ENCODE measurements at regions of chr16 and their contacts with region 1.

Region 1: DNA sequence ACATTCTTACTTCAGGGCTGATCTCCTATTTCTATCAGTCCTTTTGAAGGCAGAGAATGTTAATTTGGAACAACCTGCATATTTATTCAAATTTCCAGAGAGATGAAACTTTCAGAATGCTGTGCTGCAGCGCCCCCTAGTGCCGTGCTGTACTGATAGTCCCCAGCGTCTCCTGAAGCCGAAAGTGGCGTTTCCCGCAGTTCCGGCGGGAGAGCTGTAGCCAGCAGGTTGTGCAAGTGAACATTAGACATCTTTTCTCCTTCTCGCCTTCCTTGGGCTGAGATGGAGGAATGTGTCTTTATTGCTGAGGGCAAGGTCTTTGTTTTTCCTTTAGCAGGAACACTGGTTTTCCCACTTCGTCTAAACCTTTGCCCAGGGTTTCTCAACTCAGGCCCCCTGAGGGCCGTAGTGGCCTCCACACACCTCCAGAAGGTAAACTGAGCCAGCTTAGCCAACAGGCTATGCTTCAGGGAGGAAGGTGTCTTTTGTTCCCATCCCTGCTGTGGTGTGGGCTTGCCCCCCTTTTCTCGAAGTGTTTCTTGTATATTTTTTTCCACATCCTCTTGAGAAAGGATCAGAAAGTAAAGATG is 26.4 kb downstream of the USP10 start:
- DNase-seq: peak; percentile 85
- ATAC-seq: peak; percentile 55
- H3K4me3 ChIP-seq: peak overlapping the region; percentile 28 to 59 (median 52)
- H3K4me3 Mint-ChIP-seq: peak overlapping the region; percentile 87
- H3K27ac ChIP-seq: peak overlapping the region; percentile 55 to 78
- H3K27ac Mint-ChIP-seq: peak overlapping the region; percentile 90
- H3K4me1 ChIP-seq: peaks cover 44 to 58% of the 10 kb centered on the region in 2 donors
- H3K4me1 Mint-ChIP-seq: peaks cover 74% of the 10 kb centered on the region
- H3K27me3 ChIP-seq: no peaks in the 10 kb centered on the region
- H3K27me3 Mint-ChIP-seq: no peaks in the 10 kb centered on the region
- CTCF ChIP-seq: peak; percentile 99

Region 2: GRCh38 chr16:84504420-84505248 is 221.5 kb before region 1 on chr16 and contains the start of gene MEAK7:
- CTCF ChIA-PET with region 1: interaction called, 16 read pairs
- POLR2A ChIA-PET with region 1: no interaction called
- intact Hi-C with region 1: no loop called
- DNase-seq: peak; percentile 98
- ATAC-seq: peak; percentile 97
- H3K4me3 ChIP-seq: peak within 1 kb of the TSS; percentile 63 to 88 (median 77)
- H3K4me3 Mint-ChIP-seq: peak within 1 kb of the TSS; percentile 95
- H3K27ac ChIP-seq: peak within 1 kb of the TSS; percentile 47 to 65
- H3K27ac Mint-ChIP-seq: peak within 1 kb of the TSS; percentile 90
- H3K4me1 ChIP-seq: peaks cover 33 to 44% of the 10 kb centered on the region in 2 donors
- H3K4me1 Mint-ChIP-seq: peaks cover 49% of the 10 kb centered on the region
- H3K27me3 ChIP-seq: no peaks in the 10 kb centered on the region
- H3K27me3 Mint-ChIP-seq: no peaks in the 10 kb centered on the region
- CTCF ChIP-seq: no peak
- total RNA-seq, gene MEAK7: 19.3 and 23.0 TPM in 2 replicates

Region 3: DNA sequence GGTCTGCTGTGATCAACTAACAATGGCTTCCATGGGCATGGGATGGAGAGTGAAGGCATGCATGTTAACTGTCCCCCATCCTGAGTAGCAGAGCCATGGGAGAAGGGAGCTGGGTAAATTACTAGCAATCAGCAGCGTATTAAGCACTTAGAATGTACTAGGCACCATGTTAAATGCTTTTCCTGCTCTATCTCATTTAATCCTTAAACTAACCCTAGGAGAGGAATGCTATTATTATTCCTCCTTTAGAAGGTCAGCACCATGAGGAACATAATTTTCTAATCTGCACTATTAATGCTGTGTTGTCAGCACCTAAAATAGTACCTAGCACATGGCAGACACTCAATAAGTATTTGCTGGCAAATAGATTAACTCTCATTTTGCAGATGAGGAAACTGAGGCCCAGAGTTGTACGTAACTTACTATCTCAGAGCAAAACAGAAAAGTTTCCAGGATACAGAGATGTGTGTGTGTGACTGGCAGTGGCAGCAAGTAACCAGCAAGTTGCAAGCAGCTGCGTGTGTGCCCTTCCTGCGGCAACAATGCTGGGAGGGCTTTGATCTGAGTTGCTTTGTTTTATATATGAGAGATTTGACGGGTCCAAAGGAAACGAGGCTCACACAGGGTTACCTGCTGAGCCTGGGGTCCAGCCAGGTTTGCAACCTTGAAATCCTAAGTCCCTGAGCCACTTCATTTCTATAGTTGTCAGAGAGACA is 84.4 kb before region 1 on chr16:
- CTCF ChIA-PET with region 1: interaction called, 36 read pairs
- POLR2A ChIA-PET with region 1: no interaction called
- intact Hi-C with region 1: no loop called
- DNase-seq: no peak
- ATAC-seq: no peak
- H3K4me3 ChIP-seq: peak overlapping the region in 1 of 5 experiments; percentile 38
- H3K4me3 Mint-ChIP-seq: peak overlapping the region; percentile 81
- H3K27ac ChIP-seq: peak overlapping the region; percentile 74 to 75
- H3K27ac Mint-ChIP-seq: peak overlapping the region; percentile 96
- H3K4me1 ChIP-seq: peaks cover 54 to 76% of the 10 kb centered on the region in 2 donors
- H3K4me1 Mint-ChIP-seq: peaks cover 78% of the 10 kb centered on the region
- H3K27me3 ChIP-seq: no peaks in the 10 kb centered on the region
- H3K27me3 Mint-ChIP-seq: no peaks in the 10 kb centered on the region
- CTCF ChIP-seq: no peak

Region 4: DNA sequence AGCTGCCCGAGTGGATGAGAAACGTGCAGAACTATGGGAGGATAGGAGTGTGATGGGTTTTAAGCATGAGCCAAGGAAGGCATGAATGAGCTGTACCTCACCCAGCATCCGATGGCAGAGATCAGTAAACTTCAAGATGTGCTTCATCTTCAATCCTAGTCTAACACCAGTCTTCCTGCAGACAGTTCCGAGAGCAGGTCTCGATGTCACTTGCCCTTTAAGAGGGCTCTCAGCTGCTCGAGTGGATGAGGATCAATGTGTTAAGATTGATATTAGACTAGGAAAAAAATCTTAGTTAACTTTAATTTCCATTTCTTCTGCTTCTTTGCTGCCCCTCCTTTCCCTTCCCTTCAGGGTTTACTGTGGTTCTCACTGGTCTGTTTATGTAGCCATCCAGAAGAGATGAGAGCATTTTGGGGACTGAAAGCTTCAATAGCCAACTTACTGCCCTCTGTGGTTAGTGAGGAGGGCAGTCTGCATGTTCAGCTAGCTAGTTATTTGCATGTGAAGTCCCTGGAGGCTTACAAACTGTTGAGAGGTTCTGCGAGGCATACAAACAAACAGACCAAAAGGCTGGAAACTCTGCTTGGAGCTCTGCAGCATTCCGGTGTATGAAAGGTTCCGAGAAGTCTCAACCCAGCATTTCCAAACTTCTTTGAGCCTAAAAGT is 62.6 kb before region 1 on chr16:
- CTCF ChIA-PET with region 1: interaction called, 39 read pairs
- POLR2A ChIA-PET with region 1: interaction called, 4 read pairs
- intact Hi-C with region 1: no loop called
- DNase-seq: peak; percentile 61
- ATAC-seq: peak; percentile 93
- H3K4me3 ChIP-seq: peak overlapping the region in 1 of 5 experiments; percentile 20
- H3K4me3 Mint-ChIP-seq: peak overlapping the region; percentile 78
- H3K27ac ChIP-seq: peak overlapping the region in 1 of 2 donors; percentile 16
- H3K27ac Mint-ChIP-seq: peak overlapping the region; percentile 69
- H3K4me1 ChIP-seq: peaks cover 23 to 24% of the 10 kb centered on the region in 2 donors
- H3K4me1 Mint-ChIP-seq: peaks cover 29% of the 10 kb centered on the region
- H3K27me3 ChIP-seq: no peaks in the 10 kb centered on the region
- H3K27me3 Mint-ChIP-seq: no peaks in the 10 kb centered on the region
- CTCF ChIP-seq: no peak

Region 5: DNA sequence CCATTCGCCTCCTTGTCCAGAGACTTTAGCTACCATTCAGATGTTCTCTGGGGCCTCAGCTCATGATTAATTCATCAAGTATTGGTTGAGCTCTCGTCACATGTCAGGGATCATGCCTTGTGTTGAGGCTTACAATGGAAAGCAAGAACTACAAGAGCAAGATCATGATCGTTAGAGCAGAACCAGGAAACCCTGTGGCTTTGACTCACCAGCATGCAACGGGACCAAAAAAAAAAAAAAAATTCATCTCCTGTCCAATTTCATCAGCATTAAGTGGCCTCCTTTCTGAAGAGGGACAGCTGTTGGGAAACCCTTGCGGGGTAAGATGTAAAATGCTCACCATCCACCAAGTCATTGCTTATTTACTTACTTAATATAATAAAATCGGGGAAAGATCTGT is 38.5 kb before region 1 on chr16:
- CTCF ChIA-PET with region 1: interaction called, 24 read pairs
- POLR2A ChIA-PET with region 1: no interaction called
- intact Hi-C with region 1: no loop called
- DNase-seq: peak; percentile 72
- ATAC-seq: peak; percentile 97
- H3K4me3 ChIP-seq: no peak overlapping the region
- H3K4me3 Mint-ChIP-seq: peak overlapping the region; percentile 74
- H3K27ac ChIP-seq: no peak overlapping the region
- H3K27ac Mint-ChIP-seq: peak overlapping the region; percentile 85
- H3K4me1 ChIP-seq: peaks cover 10 to 17% of the 10 kb centered on the region in 2 donors
- H3K4me1 Mint-ChIP-seq: peaks cover 21% of the 10 kb centered on the region
- H3K27me3 ChIP-seq: no peaks in the 10 kb centered on the region
- H3K27me3 Mint-ChIP-seq: peaks cover 7% of the 10 kb centered on the region
- CTCF ChIP-seq: no peak

Region 6: GRCh38 chr16:84714028-84714427 is 12.1 kb before region 1 on chr16:
- CTCF ChIA-PET with region 1: interaction called, 28 read pairs
- POLR2A ChIA-PET with region 1: interaction called, 7 read pairs
- intact Hi-C with region 1: no loop called
- DNase-seq: no peak
- ATAC-seq: no peak
- H3K4me3 ChIP-seq: no peak overlapping the region
- H3K4me3 Mint-ChIP-seq: peak overlapping the region; percentile 2
- H3K27ac ChIP-seq: peak overlapping the region in 1 of 2 donors; percentile 24
- H3K27ac Mint-ChIP-seq: peak overlapping the region; percentile 38
- H3K4me1 ChIP-seq: peaks cover 27 to 36% of the 10 kb centered on the region in 2 donors
- H3K4me1 Mint-ChIP-seq: peaks cover 78% of the 10 kb centered on the region
- H3K27me3 ChIP-seq: no peaks in the 10 kb centered on the region
- H3K27me3 Mint-ChIP-seq: no peaks in the 10 kb centered on the region
- CTCF ChIP-seq: no peak

Region 7: DNA sequence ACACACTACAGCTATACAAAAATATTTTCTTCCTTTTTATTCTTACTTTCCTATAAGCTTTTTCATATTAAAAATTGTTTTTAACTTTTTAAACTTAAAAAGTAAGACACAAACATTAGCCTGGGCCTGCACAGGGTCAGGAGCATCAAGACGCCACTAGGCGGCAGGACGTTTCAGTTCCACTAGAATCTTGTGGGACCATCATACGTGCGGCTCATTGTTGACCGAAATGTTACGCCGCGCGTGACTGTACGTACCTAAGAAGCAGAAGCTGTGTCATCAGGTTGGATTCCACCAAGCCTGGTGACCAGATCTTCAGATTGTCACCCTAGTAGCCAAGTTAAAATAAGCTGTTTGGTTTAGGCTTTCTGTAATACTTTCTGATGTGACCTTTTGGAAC is 20.7 kb after region 1 on chr16:
- CTCF ChIA-PET with region 1: interaction called, 11 read pairs
- POLR2A ChIA-PET with region 1: no interaction called
- intact Hi-C with region 1: no loop called
- DNase-seq: no peak
- ATAC-seq: no peak
- H3K4me3 ChIP-seq: no peak overlapping the region
- H3K4me3 Mint-ChIP-seq: no peak overlapping the region
- H3K27ac ChIP-seq: no peak overlapping the region
- H3K27ac Mint-ChIP-seq: no peak overlapping the region
- H3K4me1 ChIP-seq: peaks cover 16 to 19% of the 10 kb centered on the region in 2 donors
- H3K4me1 Mint-ChIP-seq: peaks cover 33% of the 10 kb centered on the region
- H3K27me3 ChIP-seq: no peaks in the 10 kb centered on the region
- H3K27me3 Mint-ChIP-seq: no peaks in the 10 kb centered on the region
- CTCF ChIP-seq: peak; percentile 29

Region 8: GRCh38 chr16:84854759-84855158 is 128.6 kb after region 1 on chr16:
- CTCF ChIA-PET with region 1: no interaction called
- POLR2A ChIA-PET with region 1: no interaction called
- intact Hi-C with region 1: no loop called
- DNase-seq: no peak
- ATAC-seq: no peak
- H3K4me3 ChIP-seq: no peak overlapping the region
- H3K4me3 Mint-ChIP-seq: no peak overlapping the region
- H3K27ac ChIP-seq: no peak overlapping the region
- H3K27ac Mint-ChIP-seq: no peak overlapping the region
- H3K4me1 ChIP-seq: no peaks in the 10 kb centered on the region
- H3K4me1 Mint-ChIP-seq: no peaks in the 10 kb centered on the region
- H3K27me3 ChIP-seq: no peaks in the 10 kb centered on the region
- H3K27me3 Mint-ChIP-seq: peaks cover 17% of the 10 kb centered on the region
- CTCF ChIP-seq: no peak

Measured in B cell (primary cell).